Activated CD4-positive, alpha-beta T cell treated with anti-CD3 and anti-CD28 coated beads for 36 hours (primary cell): ENCODE measurements at regions of chr1 and their contacts with region 1.

Region 1: DNA sequence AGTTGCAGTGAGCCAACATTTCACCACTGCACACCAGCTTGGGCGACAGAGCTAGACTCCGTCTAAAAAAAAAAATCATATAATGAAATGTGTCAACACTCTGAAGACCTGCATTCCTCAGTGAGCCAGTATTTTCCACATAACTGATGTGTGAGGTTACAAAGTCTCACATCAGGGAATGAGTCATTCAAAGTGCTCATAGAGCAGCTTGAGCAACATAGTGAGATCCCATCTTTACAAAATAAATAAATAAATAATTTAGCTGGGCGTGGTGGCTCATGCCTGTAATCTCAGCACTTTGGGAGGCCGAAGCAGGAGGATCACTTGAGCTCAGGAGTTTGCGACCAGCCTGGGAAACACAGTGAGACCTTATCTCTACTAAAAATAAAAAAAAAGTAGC is 65.4 kb downstream of the CASZ1 start:
- DNase-seq: peak; percentile 29
- ATAC-seq: peak; percentile 63
- H3K4me3 Mint-ChIP-seq: no peak overlapping the region
- H3K27ac Mint-ChIP-seq: no peak overlapping the region
- H3K4me1 Mint-ChIP-seq: peaks cover 20% of the 10 kb centered on the region
- H3K27me3 Mint-ChIP-seq: no peaks in the 10 kb centered on the region

Region 2: DNA sequence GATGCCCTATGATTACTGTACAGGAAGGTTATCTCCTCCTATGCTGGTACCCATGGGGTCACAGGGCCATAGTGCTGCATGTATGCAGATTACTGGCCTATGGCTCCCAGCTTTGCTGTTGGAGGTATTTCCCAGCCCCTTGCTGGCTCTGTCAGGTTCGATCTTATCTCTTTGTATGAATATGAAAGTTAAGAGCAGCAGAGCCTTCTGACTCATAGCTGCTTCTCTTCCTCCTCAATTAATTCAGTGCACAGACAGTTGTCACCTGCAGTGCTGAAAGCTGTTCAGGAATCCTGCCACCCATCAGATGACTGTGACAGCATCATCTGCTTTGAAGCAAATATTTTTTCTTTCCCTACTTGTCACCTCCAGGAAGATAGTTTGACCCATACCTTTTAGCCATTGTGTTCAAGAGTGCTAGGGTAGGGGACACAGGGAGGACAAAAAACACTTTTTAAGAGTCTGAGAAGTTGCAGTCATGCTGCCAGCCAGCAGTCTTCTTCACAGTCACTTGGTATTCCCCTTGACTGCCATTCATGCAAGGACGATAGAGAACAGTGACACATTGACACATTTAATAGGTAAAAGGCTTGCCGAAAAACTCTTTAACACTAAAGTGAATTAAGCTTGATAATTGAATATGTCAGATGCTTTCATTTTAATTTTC is 447.6 kb before region 1 on chr1:
- CTCF ChIA-PET with region 1: no interaction called
- POLR2A ChIA-PET with region 1: no interaction called
- intact Hi-C with region 1: no loop called
- DNase-seq: peak; percentile 62
- ATAC-seq: peak; percentile 94
- H3K4me3 Mint-ChIP-seq: no peak overlapping the region
- H3K27ac Mint-ChIP-seq: peak overlapping the region; percentile 26
- H3K4me1 Mint-ChIP-seq: peaks cover 30% of the 10 kb centered on the region
- H3K27me3 Mint-ChIP-seq: no peaks in the 10 kb centered on the region

Region 3: GRCh38 chr1:10704368-10704911 is 26.6 kb before region 1 on chr1:
- CTCF ChIA-PET with region 1: no interaction called
- POLR2A ChIA-PET with region 1: interaction called, 10 read pairs
- intact Hi-C with region 1: no loop called
- DNase-seq: no peak
- ATAC-seq: no peak
- H3K4me3 Mint-ChIP-seq: no peak overlapping the region
- H3K27ac Mint-ChIP-seq: no peak overlapping the region
- H3K4me1 Mint-ChIP-seq: no peaks in the 10 kb centered on the region
- H3K27me3 Mint-ChIP-seq: peaks cover 2% of the 10 kb centered on the region